Calu3 (cell line): ENCODE measurements at regions of chr1 and their contacts with region 1.

Region 1: GRCh38 chr1:60978421-60979357 is 103.7 kb upstream of the NFIA start:
- DNase-seq: peak; percentile 66
- H3K4me3 Mint-ChIP-seq: no peak overlapping the region
- H3K27ac Mint-ChIP-seq: no peak overlapping the region
- H3K4me1 Mint-ChIP-seq: no peaks in the 10 kb centered on the region
- H3K27me3 Mint-ChIP-seq: no peaks in the 10 kb centered on the region
- CTCF ChIP-seq: peak; percentile 57

Region 2: DNA sequence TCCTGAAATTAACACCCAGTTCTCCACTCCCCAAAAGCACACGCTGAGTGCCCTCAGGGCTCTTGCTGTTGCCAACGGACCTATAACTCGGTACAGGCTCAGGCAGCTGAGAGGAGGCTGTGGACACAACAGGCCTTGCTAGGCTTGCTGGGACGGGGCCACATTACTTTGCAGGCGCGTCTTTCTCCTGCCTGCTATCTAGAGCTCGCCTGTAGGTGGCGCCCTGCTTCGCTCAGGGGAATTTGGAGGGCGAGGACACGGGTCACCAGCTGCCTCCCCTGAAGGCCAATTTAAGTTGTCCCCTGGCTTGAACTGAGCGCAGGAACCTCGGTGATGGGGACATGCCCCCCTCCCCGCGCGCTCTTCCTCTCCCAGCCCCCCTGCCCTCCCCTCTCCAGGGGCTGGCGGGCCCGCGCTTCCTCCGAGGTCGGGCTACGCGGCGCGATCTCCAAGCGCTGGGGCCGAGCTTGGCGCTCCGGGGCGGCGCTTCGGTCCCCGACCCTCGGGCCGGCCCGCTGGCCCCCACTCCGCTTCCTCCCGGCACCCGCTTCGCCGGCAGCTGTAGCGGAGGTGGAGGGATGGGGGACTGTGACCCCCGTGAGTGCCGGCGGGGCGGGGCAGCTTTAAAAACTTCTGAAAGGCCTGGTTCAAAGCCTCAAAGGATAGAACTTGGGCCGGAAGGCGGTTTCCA is 71.3 kb after region 1 on chr1:
- CTCF ChIA-PET with region 1: interaction called, 19 read pairs
- intact Hi-C with region 1: no loop called
- DNase-seq: peak; percentile 93
- H3K4me3 Mint-ChIP-seq: peak overlapping the region; percentile 71
- H3K27ac Mint-ChIP-seq: peak overlapping the region; percentile 33
- H3K4me1 Mint-ChIP-seq: peaks cover 19% of the 10 kb centered on the region
- H3K27me3 Mint-ChIP-seq: peaks cover 27% of the 10 kb centered on the region
- CTCF ChIP-seq: peak; percentile 97

Region 3: GRCh38 chr1:61238371-61238689 is 259.6 kb after region 1 on chr1:
- CTCF ChIA-PET with region 1: no interaction called
- intact Hi-C with region 1: loop called (anchors 10 kb)
- DNase-seq: no peak
- H3K4me3 Mint-ChIP-seq: no peak overlapping the region
- H3K27ac Mint-ChIP-seq: no peak overlapping the region
- H3K4me1 Mint-ChIP-seq: peaks cover 15% of the 10 kb centered on the region
- H3K27me3 Mint-ChIP-seq: no peaks in the 10 kb centered on the region
- CTCF ChIP-seq: no peak

Region 4: DNA sequence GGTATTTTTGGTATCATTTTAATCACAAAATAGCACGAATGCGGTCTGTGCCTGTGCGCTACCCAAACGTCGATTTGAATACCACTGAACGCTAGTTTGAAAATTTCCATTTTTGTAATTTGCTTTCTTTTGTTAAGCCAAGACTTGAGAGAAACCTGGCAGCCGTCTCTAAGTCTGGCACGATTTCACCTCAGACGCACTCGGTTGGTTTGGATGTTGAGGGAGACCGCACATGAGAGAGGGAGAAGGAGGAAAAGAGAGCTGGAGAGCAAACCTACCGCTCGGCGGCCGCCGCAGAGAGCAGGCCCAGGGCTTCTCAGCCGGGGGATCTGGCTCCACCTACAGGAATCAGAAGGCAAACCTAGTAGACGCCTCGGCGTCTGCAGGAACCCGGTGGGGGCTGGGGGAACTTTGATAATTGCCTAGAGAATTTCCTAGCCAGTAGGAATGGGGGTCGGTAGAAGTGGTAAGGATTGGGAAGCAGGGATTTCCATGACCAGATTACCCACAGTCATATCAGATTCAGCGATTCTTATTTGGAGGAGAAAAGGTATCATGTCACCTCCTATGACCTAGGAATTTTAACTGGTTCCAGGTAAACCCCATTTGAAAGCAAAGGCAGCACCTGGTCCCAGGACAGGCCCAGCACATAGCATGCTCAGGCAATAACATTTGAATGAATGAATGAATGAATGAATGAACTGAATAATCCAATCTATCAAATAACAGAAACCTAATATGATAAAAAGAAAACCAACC is 663.1 kb after region 1 on chr1:
- CTCF ChIA-PET with region 1: no interaction called
- intact Hi-C with region 1: loop called (anchors 10 kb)
- DNase-seq: peak; percentile 84
- H3K4me3 Mint-ChIP-seq: no peak overlapping the region
- H3K27ac Mint-ChIP-seq: no peak overlapping the region
- H3K4me1 Mint-ChIP-seq: peaks cover 15% of the 10 kb centered on the region
- H3K27me3 Mint-ChIP-seq: peaks cover 14% of the 10 kb centered on the region
- CTCF ChIP-seq: peak; percentile 74